ENCODE measurements at regions of chr2 and their contacts with region 1.

Region 1: DNA sequence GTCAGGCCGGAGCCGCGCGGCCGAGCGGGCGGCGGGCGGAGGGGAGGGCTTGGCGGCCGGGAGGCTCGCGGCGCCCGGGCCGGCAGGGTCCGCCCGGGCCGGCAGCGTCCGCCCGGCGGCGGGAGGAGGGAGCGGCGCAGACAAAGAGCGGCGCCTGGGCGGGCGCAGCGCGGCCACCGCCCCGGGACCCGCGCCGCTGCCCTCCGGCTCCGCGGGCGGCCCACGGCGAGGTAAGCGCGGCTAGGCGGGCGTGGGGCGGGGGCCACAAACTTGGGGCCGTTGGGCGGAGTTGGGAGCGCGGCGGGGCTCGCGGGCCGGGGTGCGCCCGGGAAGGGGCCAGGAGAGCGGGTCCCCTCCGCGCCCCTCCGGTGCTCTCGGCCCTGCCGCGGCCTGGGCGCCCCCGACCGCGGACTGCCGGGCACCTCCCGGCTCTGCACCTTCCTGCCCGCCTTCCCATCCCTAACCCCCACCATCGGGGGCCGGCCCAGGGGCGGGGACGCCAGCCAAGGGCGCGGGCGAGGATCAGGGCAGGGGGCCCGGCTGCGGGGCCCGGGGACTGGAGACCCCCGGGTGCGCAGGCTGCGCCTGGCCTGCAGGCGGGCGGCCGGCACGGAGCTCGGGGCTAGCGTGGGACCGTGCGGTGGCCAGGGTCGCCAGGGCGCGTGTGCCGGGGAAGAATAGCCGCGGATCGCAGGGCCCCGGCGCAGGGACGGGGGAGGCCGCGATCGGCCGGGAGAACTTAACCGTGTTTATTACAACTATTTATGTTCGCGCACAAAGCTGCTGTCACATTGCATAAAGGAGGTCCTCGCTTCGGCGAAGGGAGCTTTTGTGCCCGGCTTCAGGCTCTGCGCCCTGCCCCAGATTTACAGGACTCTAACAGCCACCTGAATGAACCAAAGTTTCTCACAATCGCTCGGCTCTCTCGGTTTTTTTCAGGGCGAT is at the start of gene NCK2:
- DNase-seq: peak; percentile 45
- ATAC-seq: peak; percentile 14
- H3K4me3 Mint-ChIP-seq: peak within 1 kb of the TSS; percentile 94
- H3K27ac Mint-ChIP-seq: peak within 1 kb of the TSS; percentile 88
- H3K4me1 Mint-ChIP-seq: peaks cover 66% of the 10 kb centered on the region
- H3K27me3 Mint-ChIP-seq: no peaks in the 10 kb centered on the region
- total RNA-seq, gene NCK2: 60.7 to 61.3 TPM

Region 2: DNA sequence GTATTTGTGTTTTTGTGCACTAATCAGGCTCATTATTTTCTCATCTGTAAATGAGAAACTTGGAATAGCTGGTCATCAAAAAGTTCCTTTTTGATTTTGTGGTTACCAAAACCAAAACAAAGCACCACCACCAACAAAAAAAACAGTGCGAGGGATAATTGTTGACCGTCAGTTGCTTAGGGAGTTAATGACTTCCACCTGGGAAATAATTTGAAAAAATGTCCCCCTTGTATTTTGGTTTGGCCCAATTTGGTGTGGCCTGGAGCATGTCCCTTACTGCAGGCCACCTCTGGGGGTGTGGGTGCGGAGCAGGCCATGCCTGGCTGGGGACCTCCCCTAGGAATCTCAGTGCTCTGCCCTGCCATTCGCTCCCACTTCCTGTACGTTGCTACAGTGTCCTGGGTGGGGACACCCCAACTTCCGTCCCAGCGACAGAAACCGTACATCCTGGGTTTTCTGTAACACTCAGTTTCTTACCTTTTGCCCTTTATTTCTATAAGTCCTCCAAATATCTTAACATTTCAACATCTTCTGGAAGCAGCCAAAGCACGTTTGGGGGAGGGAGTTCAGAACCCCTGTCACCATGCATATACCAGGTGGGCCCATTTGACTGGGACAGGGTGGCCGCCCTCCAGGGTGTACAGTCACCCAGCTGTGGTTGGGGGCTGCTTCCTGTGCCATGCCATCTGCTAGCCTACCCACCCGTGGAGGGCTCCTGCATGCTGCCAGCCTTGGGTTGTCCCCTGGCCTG is 30.8 kb after region 1 on chr2:
- CTCF ChIA-PET with region 1: interaction called, 11 read pairs
- POLR2A ChIA-PET with region 1: interaction called, 29 read pairs
- DNase-seq: peak; percentile 58
- ATAC-seq: peak; percentile 76
- H3K4me3 Mint-ChIP-seq: peak overlapping the region; percentile 63
- H3K27ac Mint-ChIP-seq: peak overlapping the region; percentile 85
- H3K4me1 Mint-ChIP-seq: peaks cover 87% of the 10 kb centered on the region
- H3K27me3 Mint-ChIP-seq: no peaks in the 10 kb centered on the region

Region 3: DNA sequence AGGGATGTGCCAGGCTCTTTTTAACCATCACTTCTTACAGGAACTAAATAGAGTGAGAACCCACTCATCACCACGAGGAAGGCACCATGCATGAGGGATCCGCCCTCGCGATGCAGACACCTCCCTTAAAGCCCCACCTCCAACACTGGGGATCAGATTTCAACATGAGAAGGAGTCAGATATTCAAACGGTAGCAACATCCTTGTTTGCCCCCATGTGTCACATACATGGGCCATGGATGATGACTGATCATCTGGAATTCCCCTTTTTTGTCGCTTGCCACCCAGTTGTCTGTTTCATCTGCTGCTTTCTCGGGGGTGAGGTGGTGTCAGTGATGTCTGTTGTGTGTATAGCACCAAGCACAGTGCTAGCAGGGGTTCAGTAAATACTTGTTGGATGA is 57.4 kb after region 1 on chr2:
- CTCF ChIA-PET with region 1: interaction called, 7 read pairs
- POLR2A ChIA-PET with region 1: interaction called, 44 read pairs
- DNase-seq: peak; percentile 42
- ATAC-seq: peak; percentile 43
- H3K4me3 Mint-ChIP-seq: peak overlapping the region; percentile 31
- H3K27ac Mint-ChIP-seq: peak overlapping the region; percentile 97
- H3K4me1 Mint-ChIP-seq: peaks cover 92% of the 10 kb centered on the region
- H3K27me3 Mint-ChIP-seq: no peaks in the 10 kb centered on the region

Region 4: DNA sequence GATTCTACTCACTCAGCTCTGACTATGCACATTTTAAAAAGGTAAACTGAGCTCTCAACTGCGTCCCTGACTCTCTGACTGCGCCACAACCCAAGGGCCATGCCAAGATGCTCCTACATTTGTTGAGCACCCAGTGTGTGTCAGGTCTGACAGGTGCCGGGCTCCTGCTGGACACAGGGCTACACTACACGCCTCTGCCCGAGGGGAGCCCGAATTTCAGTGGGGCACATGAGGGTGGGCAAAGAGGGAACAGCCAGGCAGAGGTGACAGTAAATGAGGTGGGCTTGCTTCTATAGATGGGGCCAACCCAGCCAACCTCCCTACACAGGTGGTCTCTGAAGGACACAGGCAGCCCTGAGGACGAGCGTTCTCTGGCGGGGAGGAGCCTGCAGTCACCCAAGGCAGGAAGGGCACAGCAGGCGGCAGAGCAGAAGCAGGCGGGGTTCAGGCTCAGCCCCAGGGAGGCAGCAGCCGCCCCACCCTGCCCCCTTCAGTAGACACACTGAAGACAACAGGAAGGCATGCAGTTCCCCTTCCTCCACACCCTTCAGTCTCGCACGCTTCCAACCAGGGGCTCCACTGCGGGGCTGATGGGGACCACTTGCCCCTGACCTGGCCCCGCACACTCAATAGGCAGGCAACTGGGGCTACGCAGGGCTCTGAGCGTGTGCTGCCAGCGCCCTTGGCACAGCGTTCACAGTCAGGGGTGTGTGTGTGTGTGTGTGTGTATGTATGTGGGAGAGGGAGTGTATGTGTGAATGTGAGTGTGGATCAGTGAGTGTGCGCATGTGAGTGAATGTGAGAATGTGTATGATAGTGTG is 350.5 kb after region 1 on chr2:
- CTCF ChIA-PET with region 1: interaction called, 10 read pairs
- POLR2A ChIA-PET with region 1: interaction called, 3 read pairs
- DNase-seq: peak; percentile 92
- ATAC-seq: peak; percentile 87
- H3K4me3 Mint-ChIP-seq: peak overlapping the region; percentile 69
- H3K27ac Mint-ChIP-seq: peak overlapping the region; percentile 89
- H3K4me1 Mint-ChIP-seq: peaks cover 69% of the 10 kb centered on the region
- H3K27me3 Mint-ChIP-seq: no peaks in the 10 kb centered on the region